Caco-2 (cell line): ENCODE measurements at regions of chr22 and their contacts with region 1.

Region 1: DNA sequence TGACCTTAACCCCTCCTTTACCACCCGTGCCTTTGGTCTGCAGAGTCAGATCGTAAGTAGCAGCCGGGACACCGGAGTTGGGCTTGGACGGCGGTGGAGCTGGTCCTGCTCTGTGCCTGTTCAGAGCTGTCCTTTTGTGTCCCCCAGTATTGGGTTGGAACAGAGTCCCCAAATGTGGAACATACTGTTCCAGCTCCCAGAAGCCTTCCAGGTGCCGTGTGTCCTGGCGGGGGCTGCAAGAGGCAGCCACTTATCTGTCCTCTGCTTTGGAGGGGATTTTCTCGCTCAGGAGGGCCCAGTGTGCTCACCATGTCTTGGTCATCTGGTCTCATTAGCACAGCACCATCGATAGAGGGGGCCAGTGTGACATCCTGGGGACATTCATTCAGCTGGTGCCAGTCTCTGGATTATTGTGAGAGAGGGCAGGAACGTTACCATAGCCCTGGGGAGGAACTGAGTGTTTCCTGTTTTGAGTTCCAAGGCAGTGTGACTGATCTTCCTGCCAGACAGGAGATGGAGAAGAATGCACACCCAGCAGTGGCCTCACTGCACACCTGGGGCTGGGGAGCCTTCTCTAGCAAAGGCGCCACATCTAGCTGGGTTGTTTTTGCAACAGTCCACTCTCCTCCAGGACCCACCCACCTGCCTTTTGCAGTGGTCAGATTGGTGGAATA is 12.4 kb downstream of the CRELD2 start:
- DNase-seq: peak; percentile 75 to 76
- H3K4me3 ChIP-seq: no peak overlapping the region
- H3K4me3 Mint-ChIP-seq: no peak overlapping the region
- H3K27ac Mint-ChIP-seq: no peak overlapping the region
- H3K4me1 ChIP-seq: no peaks in the 10 kb centered on the region; the same call in none of the 2 replicates
- H3K4me1 Mint-ChIP-seq: no peaks in the 10 kb centered on the region
- H3K27me3 ChIP-seq: no peaks in the 10 kb centered on the region
- H3K27me3 Mint-ChIP-seq: no peaks in the 10 kb centered on the region
- CTCF ChIP-seq: peak; percentile 69 to 73

Region 2: GRCh38 chr22:49827853-49828598 is 102.8 kb before region 1 on chr22 and contains the start of gene BRD1:
- CTCF ChIA-PET with region 1: no interaction called
- POLR2A ChIA-PET with region 1: no interaction called
- intact Hi-C with region 1: no loop called
- DNase-seq: peak in 1 of 2 experiments; percentile 68
- H3K4me3 ChIP-seq: peak within 1 kb of the TSS; percentile 65
- H3K4me3 Mint-ChIP-seq: peak within 1 kb of the TSS; percentile 77
- H3K27ac Mint-ChIP-seq: peak within 1 kb of the TSS; percentile 70
- H3K4me1 ChIP-seq: peaks cover 13% of the 10 kb centered on the region
- H3K4me1 Mint-ChIP-seq: peaks cover 6% of the 10 kb centered on the region
- H3K27me3 ChIP-seq: no peaks in the 10 kb centered on the region
- H3K27me3 Mint-ChIP-seq: no peaks in the 10 kb centered on the region
- CTCF ChIP-seq: no peak
- total RNA-seq, gene BRD1: 46.9 and 48.3 TPM in 2 replicates

Region 3: GRCh38 chr22:49894322-49895054 is 36.4 kb before region 1 on chr22:
- CTCF ChIA-PET with region 1: no interaction called
- POLR2A ChIA-PET with region 1: no interaction called
- intact Hi-C with region 1: no loop called
- DNase-seq: no peak
- H3K4me3 ChIP-seq: no peak overlapping the region
- H3K4me3 Mint-ChIP-seq: no peak overlapping the region
- H3K27ac Mint-ChIP-seq: no peak overlapping the region
- H3K4me1 ChIP-seq: no peaks in the 10 kb centered on the region
- H3K4me1 Mint-ChIP-seq: no peaks in the 10 kb centered on the region
- H3K27me3 ChIP-seq: no peaks in the 10 kb centered on the region
- H3K27me3 Mint-ChIP-seq: no peaks in the 10 kb centered on the region
- CTCF ChIP-seq: no peak

Region 4: GRCh38 chr22:49951000-49951677 is 20.3 kb after region 1 on chr22:
- CTCF ChIA-PET with region 1: interaction called, 19 read pairs
- POLR2A ChIA-PET with region 1: interaction called, 3 read pairs
- intact Hi-C with region 1: no loop called
- DNase-seq: peak; percentile 89 to 91
- H3K4me3 ChIP-seq: no peak overlapping the region
- H3K4me3 Mint-ChIP-seq: peak overlapping the region; percentile 75
- H3K27ac Mint-ChIP-seq: peak overlapping the region; percentile 99
- H3K4me1 ChIP-seq: peaks cover 82% of the 10 kb centered on the region
- H3K4me1 Mint-ChIP-seq: peaks cover 8% of the 10 kb centered on the region
- H3K27me3 ChIP-seq: no peaks in the 10 kb centered on the region
- H3K27me3 Mint-ChIP-seq: no peaks in the 10 kb centered on the region
- CTCF ChIP-seq: no peak

Region 5: DNA sequence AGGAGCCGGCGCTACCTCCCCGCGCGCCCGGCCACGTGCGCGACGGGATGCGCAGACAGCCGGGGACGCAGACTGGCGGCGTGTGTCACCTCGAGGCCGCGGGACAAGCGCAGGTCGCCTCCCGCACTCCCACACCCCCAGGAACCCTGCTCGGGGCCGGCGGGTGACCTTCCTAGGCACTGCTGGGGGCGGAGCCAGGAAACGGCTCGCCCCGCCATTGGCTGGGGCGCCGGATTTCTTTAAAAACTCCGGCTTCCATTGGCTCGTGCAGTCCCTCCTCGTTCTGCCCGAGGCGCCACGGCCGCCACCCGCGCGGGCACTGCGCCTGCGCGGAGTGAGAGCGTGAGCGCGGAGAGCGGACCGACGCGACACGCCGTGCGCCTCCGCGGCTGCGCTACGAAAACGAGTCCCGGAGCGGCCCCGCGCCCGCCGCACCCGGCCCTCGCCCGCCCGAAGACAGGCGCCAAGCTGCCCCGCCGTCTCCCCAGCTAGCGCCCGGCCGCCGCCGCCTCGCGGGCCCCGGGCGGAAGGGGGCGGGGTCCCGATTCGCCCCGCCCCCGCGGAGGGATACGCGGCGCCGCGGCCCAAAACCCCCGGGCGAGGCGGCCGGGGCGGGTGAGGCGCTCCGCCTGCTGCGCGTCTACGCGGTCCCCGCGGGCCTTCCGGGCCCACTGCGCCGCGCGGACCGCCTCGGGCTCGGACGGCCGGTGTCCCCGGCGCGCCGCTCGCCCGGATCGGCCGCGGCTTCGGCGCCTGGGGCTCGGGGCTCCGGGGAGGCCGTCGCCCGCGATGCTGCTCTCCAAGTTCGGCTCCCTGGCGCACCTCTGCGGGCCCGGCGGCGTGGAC is 29.5 kb after region 1 on chr22 and contains the start of gene PIM3:
- CTCF ChIA-PET with region 1: interaction called, 5 read pairs
- POLR2A ChIA-PET with region 1: interaction called, 3 read pairs
- intact Hi-C with region 1: loop called (anchors 1 kb)
- DNase-seq: peak; percentile 95 to 96
- H3K4me3 ChIP-seq: peak within 1 kb of the TSS; percentile 80
- H3K4me3 Mint-ChIP-seq: peak within 1 kb of the TSS; percentile 82
- H3K27ac Mint-ChIP-seq: peak within 1 kb of the TSS; percentile 92
- H3K4me1 ChIP-seq: peaks cover 46% of the 10 kb centered on the region
- H3K4me1 Mint-ChIP-seq: peaks cover 7% of the 10 kb centered on the region
- H3K27me3 ChIP-seq: no peaks in the 10 kb centered on the region
- H3K27me3 Mint-ChIP-seq: no peaks in the 10 kb centered on the region
- CTCF ChIP-seq: no peak
- total RNA-seq, gene PIM3: 39.6 and 41.1 TPM in 2 replicates